ENCODE measurements at regions of chr1 and their contacts with region 1.

Region 1: DNA sequence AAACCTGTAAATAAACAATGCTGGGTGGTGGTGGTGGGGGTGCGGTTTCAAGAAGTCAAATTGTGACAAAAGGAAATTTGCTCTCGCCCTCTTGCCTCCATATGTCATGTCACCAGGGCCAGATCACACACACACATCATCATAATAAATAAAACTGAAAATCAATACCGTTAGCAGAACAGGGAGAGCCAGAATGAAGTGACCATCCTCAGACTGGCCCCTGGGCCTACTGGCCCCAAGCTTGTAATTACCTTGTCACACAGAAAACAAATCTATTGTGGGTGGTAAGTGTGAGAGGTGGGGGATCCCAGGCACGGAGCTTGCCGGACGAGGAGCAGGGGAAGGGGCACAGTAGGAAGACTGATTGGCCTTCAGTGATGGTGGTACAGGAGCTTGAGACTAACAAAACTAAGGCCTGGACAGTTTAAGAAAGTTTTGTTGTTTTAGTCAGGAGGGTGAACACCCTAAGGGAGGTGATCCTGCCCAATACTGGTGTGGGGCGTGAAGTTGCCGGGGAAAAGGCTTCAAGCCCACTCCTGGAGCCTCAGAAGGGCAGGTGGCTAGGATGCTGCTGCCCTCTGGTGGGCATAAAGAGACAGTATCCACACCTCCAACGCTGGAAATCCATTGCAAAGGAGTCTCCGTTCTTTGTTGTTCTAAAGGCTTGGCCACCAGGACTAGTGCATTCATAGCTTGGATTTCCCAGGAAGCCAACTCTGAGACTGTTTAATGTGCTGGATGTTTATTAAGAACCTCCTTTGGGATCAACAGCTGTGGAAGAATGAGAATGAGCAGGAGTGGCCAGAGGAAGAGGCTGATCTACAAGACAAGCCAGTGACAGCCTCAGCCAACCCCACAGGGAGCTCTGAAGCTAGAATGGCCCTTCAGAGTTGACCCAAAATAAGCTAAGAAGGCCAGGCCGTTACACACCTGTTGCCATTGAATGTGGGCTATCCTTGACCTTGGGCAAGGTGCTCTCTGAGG is 8.1 kb upstream of the C1orf216 start:
- DNase-seq: no peak
- H3K4me3 ChIP-seq: no peak overlapping the region
- CTCF ChIP-seq: peak; percentile 87

Region 2: GRCh38 chr1:35557292-35558063 is 169.3 kb before region 1 on chr1 and contains the starts of genes KIAA0319L and NCDN:
- CTCF ChIA-PET with region 1: interaction called, 34 read pairs
- POLR2A ChIA-PET with region 1: no interaction called
- DNase-seq: peak; percentile 86
- H3K4me3 ChIP-seq: peak within 1 kb of the TSS; percentile 97
- CTCF ChIP-seq: no peak

Region 3: DNA sequence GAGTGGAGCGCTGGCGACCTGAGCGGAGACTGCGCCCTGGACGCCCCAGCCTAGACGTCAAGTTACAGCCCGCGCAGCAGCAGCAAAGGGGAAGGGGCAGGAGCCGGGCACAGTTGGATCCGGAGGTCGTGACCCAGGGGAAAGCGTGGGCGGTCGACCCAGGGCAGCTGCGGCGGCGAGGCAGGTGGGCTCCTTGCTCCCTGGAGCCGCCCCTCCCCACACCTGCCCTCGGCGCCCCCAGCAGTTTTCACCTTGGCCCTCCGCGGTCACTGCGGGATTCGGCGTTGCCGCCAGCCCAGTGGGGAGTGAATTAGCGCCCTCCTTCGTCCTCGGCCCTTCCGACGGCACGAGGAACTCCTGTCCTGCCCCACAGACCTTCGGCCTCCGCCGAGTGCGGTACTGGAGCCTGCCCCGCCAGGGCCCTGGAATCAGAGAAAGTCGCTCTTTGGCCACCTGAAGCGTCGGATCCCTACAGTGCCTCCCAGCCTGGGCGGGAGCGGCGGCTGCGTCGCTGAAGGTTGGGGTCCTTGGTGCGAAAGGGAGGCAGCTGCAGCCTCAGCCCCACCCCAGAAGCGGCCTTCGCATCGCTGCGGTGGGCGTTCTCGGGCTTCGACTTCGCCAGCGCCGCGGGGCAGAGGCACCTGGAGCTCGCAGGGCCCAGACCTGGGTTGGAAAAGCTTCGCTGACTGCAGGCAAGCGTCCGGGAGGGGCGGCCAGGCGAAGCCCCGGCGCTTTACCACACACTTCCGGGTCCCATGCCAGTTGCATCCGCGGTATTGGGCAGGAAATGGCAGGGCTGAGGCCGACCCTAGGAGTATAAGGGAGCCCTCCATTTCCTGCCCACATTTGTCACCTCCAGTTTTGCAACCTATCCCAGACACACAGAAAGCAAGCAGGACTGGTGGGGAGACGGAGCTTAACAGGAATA is 149.4 kb before region 1 on chr1:
- CTCF ChIA-PET with region 1: interaction called, 657 read pairs
- POLR2A ChIA-PET with region 1: no interaction called
- DNase-seq: no peak
- H3K4me3 ChIP-seq: no peak overlapping the region
- CTCF ChIP-seq: no peak

Region 4: DNA sequence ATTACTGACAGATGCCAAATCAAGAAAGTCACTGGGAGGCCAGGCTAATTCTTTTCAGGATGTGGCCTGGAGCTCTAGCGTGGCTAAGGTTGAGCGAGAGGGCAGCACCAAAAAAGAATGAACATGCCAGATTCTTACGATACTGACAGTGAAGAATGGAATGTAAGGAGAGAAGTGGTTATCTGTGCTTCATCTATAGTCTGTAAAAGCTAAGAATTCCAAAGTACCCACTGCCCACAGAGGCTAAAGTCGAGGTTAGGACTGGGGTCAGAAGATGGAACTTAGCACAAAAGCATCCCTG is 120.9 kb before region 1 on chr1:
- CTCF ChIA-PET with region 1: interaction called, 30 read pairs
- POLR2A ChIA-PET with region 1: no interaction called
- DNase-seq: peak; percentile 7
- H3K4me3 ChIP-seq: no peak overlapping the region
- CTCF ChIP-seq: no peak

Region 5: DNA sequence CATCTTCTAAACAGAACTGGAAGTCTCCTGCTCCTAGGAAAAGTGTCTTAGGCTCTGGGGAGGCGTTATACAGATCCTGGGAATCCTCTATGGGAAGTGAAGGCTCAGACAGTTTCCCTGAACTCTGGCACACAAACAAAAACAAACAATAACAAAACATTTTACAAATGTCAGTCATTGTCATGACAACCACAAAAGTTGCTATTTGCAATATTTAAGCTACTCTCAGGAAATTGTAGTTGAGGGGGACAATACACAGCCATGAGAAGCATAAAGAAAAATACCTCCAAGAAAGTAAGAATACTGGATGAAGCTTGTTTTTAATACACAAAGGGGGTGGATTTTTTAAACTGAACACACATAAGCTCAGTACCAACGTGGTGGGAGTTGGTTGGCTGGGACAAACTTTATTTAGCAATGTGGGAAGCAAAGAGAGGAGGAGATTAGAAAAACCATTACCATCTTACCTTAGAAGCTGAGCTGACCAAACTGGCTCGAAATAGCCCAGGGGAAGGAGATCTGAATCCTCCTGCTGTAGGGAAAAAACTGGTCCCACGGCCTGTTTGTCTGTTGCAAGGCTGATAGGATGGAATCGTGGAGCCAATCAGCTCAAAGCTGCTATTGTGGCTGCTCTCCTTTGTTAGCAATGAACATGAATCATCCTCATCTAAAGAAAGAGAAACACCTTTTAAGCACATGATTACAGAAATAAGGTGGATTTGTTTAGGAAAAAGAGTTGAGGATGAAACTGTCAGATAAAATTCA is 21.4 kb after region 1 on chr1:
- CTCF ChIA-PET with region 1: interaction called, 203 read pairs
- POLR2A ChIA-PET with region 1: no interaction called
- DNase-seq: no peak
- H3K4me3 ChIP-seq: no peak overlapping the region
- CTCF ChIP-seq: no peak

Region 6: DNA sequence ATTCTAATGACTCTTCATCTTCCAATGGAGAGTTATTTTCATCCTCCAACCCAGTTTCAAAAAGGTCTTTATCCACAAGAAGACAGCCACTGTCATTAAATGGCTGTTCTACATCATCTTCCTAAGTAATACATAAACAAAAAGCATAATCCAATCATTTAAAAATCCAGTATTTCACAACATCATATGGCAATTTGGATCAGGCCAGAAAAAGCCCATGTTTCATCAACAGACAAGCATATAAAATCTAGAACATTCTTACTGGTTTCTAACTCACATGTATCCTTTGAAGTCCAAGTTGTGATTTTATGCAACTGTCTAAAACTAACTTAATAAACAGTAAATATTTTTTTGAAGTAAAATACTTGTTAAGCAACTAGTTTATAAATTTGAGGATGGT is 36.5 kb after region 1 on chr1:
- CTCF ChIA-PET with region 1: interaction called, 52 read pairs
- POLR2A ChIA-PET with region 1: no interaction called
- DNase-seq: no peak
- H3K4me3 ChIP-seq: no peak overlapping the region
- CTCF ChIP-seq: no peak

Region 7: DNA sequence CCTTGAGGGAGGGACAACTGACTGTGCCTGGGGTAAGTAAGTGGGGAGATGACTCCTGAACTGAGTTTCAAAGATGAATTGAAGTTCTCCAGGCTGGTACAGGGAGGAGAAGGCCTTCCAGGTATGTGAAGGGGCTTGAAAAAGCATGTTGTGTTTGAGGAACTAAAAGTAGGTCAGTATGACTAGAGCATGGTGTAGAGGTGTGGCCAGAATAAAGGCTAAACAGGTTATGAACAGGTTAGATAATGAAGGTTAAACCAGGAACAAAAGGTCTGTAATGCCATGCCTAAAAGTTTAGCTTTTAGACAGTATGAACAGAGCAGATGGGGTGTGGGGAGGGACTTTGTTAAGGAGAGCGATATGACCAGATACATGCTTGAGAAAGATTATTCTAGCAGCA is 50.4 kb after region 1 on chr1:
- CTCF ChIA-PET with region 1: interaction called, 52 read pairs
- POLR2A ChIA-PET with region 1: no interaction called
- DNase-seq: no peak
- H3K4me3 ChIP-seq: no peak overlapping the region
- CTCF ChIP-seq: no peak